ENCODE measurements at regions of chr6 and their contacts with region 1.

Region 1: DNA sequence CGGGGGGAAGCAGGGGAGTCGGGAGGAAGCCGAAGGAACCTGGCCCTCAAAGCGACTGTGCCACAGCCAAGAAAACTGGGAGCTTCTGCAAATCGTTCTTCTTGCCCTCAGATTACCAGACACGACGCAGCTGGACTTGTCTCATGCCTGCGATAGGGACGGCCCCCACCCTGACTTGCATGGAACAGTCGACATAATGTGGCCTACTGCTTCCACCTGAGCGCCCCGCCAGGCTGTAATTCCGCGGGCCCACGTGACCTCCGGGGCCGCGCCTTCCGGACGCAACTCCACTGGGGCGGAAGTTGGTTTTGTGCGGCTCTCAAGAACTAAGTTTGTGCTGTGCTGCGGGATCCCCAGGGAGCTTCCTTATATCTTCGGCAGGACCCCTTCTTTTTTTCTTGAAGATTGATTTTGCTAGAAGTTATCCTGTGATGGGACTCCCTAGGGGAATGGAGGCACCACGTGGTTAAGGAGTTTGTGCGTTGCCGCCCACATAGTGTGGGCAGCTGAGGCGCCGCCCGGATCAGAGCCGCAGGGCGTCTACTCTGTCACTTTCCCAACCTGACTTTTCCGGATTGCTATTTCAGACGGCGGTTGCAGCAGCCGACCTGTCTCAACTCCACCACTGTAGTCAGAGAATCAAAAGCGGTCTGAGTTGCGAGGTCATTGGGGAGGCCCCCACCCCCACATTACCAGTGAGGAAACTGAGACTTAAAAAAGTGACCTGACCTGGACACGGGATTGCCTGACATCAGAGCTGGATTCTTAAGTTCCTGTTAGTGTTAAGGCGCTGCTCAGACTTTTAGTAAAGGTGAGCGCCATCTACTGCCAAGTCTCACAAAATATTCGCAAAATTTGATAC is 540 bp upstream of the CD164 start:
- DNase-seq: peak; percentile 94
- H3K4me3 Mint-ChIP-seq: peak overlapping the region; percentile 95
- H3K27ac Mint-ChIP-seq: peak overlapping the region; percentile 99
- H3K4me1 Mint-ChIP-seq: peaks cover 35% of the 10 kb centered on the region
- H3K27me3 Mint-ChIP-seq: no peaks in the 10 kb centered on the region

Region 2: DNA sequence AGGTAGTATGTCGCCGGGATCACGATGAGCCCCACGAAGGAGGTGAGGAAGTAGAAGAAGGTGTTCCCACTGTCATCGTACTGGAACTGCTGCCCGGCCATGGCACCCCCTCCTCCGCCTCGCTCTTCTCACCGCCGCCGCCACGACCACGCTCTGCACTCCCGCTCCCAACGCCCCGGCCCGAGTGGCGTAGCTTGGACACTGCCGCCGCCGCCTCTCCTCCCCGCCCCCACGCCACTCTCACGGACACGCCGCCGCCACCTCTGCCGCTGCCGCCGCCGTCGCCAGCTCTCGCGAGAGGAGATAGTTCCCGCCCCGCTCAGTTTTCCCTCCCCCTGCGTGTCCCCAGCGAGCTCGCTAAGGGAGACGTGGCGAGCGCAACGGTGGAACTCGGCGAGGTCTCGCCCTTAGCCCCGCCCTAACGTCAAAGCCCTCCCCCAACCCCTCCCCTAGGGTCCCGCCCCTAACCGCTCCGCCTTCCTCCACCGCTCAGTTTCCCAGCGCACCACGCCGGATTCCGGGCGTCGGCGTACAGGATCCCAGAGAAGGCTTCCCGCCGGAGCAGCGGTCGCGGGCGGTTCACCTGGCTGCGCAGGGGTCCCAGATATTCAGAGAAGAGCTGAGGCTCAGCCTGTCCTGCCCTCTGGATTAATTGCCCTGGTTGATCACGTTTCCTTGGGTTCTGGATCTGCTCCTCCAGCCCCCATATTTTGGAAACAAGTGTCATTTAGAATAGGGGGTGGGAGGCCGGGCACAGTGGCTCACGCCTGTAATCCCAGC is 1424.7 kb before region 1 on chr6 and contains the start of gene SEC63:
- CTCF ChIA-PET with region 1: no interaction called
- POLR2A ChIA-PET with region 1: no interaction called
- intact Hi-C with region 1: loop called (anchors 5 kb)
- DNase-seq: peak; percentile 99
- H3K4me3 Mint-ChIP-seq: peak within 1 kb of the TSS; percentile 100
- H3K27ac Mint-ChIP-seq: peak within 1 kb of the TSS; percentile 95
- H3K4me1 Mint-ChIP-seq: peaks cover 26% of the 10 kb centered on the region
- H3K27me3 Mint-ChIP-seq: no peaks in the 10 kb centered on the region
- total RNA-seq, gene SEC63: 90.6 to 95.9 TPM

Region 3: DNA sequence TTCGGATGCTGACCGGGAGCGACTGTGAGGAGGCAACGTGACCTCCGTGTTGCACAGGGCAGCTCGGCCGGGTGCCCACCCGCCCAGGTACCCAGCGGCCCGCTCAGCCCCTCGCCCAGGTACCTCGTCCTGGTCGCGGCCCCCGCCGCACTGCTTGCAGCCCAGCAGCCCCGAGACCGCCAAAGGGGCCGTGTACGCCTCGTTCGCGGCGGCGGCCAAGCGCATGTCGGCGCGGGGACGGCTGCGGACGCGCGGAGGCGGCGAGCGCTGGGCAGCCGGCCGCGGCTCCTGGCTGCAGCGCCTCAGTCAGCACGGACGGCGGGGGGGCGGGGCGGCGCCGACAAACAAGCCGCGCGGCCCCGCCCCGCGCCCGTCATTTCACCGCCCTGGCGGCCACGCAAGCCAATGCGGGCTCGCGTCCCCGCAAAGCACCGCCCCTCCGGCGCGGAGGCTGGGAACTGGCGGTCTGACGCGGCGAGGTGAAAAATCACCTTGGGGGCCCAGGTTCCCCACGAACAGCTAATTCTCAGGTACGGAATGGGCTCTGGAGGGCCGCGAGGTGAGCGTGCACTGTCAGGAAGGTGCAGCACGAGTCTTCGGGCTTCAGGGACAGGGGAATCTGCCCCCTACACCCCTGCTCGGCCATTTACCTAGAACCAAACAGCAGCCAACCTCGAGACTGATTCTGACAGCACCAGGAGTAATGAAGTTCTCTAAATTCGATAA is 373.4 kb before region 1 on chr6:
- CTCF ChIA-PET with region 1: no interaction called
- POLR2A ChIA-PET with region 1: interaction called, 4 read pairs
- intact Hi-C with region 1: loop called (anchors 1 kb)
- DNase-seq: peak; percentile 93
- H3K4me3 Mint-ChIP-seq: peak overlapping the region; percentile 94
- H3K27ac Mint-ChIP-seq: peak overlapping the region; percentile 92
- H3K4me1 Mint-ChIP-seq: peaks cover 60% of the 10 kb centered on the region
- H3K27me3 Mint-ChIP-seq: no peaks in the 10 kb centered on the region

Region 4: DNA sequence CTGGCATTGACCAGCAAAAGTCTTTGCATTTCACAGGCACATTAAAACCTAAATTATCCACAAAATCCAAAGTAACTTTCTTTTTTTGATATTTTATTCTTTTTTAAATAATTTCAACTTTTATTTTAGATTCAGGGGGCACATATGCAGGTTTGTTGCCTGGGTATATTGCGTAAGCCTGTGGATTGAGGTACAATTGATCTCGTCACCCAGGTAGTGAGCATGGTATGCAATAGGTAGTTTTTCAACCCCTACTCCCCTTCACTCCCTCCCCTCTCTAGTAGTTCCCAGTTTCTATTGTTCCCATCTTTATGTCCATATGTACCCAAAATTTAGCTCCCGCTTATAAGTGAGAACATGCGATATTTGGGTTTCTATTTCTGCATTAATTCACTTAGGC is 189.9 kb before region 1 on chr6:
- CTCF ChIA-PET with region 1: interaction called, 139 read pairs
- POLR2A ChIA-PET with region 1: interaction called, 7 read pairs
- intact Hi-C with region 1: no loop called
- DNase-seq: no peak
- H3K4me3 Mint-ChIP-seq: no peak overlapping the region
- H3K27ac Mint-ChIP-seq: no peak overlapping the region
- H3K4me1 Mint-ChIP-seq: peaks cover 2% of the 10 kb centered on the region
- H3K27me3 Mint-ChIP-seq: peaks cover 3% of the 10 kb centered on the region

Region 5: DNA sequence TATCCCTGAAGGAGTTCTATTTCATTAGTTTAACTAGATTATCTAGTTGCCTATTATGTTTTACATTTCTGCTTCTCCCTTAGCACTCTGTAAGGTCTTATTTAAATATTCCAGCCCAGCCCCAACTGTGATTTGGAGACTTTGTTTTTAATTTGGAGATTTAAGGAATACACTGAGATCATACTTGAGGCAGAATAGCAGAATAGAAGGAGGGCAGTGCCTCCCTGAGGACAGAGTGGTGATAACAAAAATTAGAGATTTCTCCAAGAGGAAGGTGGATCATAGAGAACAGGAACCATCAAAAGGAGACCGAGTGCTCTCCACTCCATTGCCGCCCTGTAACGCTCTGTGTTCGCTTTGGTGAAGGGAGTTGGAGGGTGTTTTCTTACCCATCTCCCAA is 14.2 kb after region 1 on chr6:
- CTCF ChIA-PET with region 1: interaction called, 13 read pairs
- POLR2A ChIA-PET with region 1: interaction called, 6 read pairs
- intact Hi-C with region 1: no loop called
- DNase-seq: no peak
- H3K4me3 Mint-ChIP-seq: no peak overlapping the region
- H3K27ac Mint-ChIP-seq: no peak overlapping the region
- H3K4me1 Mint-ChIP-seq: peaks cover 5% of the 10 kb centered on the region
- H3K27me3 Mint-ChIP-seq: no peaks in the 10 kb centered on the region

Region 6: GRCh38 chr6:109482905-109483735 is 100.3 kb after region 1 on chr6 and contains the start of gene ZBTB24:
- CTCF ChIA-PET with region 1: interaction called, 6 read pairs
- POLR2A ChIA-PET with region 1: interaction called, 10 read pairs
- intact Hi-C with region 1: loop called (anchors 1 kb)
- DNase-seq: peak; percentile 93
- H3K4me3 Mint-ChIP-seq: peak within 1 kb of the TSS; percentile 96
- H3K27ac Mint-ChIP-seq: peak within 1 kb of the TSS; percentile 90
- H3K4me1 Mint-ChIP-seq: peaks cover 48% of the 10 kb centered on the region
- H3K27me3 Mint-ChIP-seq: no peaks in the 10 kb centered on the region
- total RNA-seq, gene ZBTB24: 10.9 to 11.8 TPM